ENCODE measurements at regions of chr5 and their contacts with region 1.

Region 1: GRCh38 chr5:93243481-93243880 is 337.5 kb downstream of the NR2F1-AS1 start:
- DNase-seq: no peak

Region 2: DNA sequence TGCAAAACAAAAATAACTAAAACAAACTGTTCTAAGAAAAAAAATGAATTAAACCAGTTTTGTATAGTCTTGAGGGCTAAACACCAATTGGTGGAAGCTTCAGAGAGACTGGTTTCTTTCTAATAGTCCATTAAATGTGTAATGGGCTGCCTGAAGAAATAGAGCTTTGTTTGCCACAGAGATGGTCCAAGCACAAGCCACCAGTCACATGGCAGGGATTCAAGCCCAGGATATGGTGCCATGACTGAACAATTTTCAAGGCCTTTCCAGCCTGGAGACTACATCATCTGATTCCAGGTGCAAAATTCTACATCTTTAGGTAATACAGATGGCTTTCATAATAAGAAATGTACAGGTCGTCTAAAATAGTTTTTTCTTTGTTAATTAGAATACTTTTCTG is 17.7 kb before region 1 on chr5:
- intact Hi-C with region 1: loop called in 1 of 2 experiments (anchors 2 kb)
- DNase-seq: no peak

Region 3: DNA sequence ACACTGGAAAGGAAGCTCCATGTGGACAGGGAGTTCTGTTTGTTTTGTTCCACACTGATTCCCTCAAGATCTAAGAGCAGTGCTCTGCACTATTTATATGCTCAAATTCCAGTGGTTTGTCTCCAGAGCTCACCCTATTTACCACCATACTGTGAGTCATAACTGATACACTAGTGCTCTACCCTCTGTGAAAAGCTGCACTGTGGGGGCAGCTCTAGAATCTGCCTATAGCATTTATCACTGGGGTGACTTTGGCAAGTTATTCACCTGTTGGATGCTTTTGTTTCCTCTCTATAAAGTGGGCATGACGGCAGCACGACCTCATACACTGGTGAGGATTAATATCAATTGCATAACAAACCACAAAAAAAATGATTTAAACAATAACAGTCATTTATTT is 29.7 kb after region 1 on chr5:
- intact Hi-C with region 1: no loop called
- DNase-seq: no peak